Activated CD4-positive, alpha-beta T cell treated with anti-CD3 and anti-CD28 coated beads for 36 hours (primary cell): ENCODE measurements at regions of chr3 and their contacts with region 1.

Region 1: DNA sequence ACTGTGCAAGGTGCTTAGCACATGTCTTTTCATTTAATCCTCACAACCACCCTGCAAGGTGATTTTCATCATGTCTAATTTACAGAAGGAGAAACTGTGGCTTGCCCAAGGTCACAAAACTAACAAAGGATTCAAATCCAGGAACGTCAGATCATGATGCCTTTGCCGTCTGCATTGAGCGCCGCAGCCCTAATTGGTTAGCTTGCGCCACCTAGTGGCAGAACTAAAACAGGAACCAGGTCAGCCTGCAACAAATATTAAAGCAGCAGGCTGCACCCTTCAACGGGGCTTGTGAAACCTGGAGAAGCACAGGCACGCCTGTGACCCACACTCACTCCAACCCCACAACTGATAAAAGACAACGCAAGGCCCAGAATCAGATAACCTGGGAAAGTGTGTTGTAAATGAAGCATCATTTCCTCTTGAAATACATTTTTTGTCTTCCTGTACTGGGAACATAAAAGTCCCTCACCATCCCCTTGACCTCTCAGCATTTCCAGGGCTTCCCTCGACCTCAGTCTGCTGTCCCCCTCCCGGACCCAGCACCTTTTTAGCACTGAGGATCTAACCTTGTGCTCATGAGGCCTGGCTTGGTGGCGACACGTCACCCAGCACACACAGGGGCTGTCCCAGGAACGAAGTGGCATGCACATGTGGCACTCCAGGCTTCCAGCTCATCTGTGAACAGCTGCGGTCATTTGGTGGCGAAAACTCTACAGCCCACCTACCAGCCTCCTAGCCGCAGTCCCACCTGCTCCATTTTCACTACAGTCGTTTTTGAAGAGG is 17.3 kb downstream of the DPH3 start:
- DNase-seq: peak; percentile 88
- ATAC-seq: peak; percentile 83
- H3K4me3 Mint-ChIP-seq: no peak overlapping the region
- H3K27ac Mint-ChIP-seq: no peak overlapping the region
- H3K4me1 Mint-ChIP-seq: peaks cover 17% of the 10 kb centered on the region
- H3K27me3 Mint-ChIP-seq: no peaks in the 10 kb centered on the region

Region 2: GRCh38 chr3:15815696-15816095 is 431.8 kb before region 1 on chr3:
- CTCF ChIA-PET with region 1: interaction called, 3 read pairs
- POLR2A ChIA-PET with region 1: no interaction called
- intact Hi-C with region 1: loop called (anchors 1 kb)
- DNase-seq: no peak
- ATAC-seq: no peak
- H3K4me3 Mint-ChIP-seq: no peak overlapping the region
- H3K27ac Mint-ChIP-seq: no peak overlapping the region
- H3K4me1 Mint-ChIP-seq: peaks cover 41% of the 10 kb centered on the region
- H3K27me3 Mint-ChIP-seq: no peaks in the 10 kb centered on the region

Region 3: DNA sequence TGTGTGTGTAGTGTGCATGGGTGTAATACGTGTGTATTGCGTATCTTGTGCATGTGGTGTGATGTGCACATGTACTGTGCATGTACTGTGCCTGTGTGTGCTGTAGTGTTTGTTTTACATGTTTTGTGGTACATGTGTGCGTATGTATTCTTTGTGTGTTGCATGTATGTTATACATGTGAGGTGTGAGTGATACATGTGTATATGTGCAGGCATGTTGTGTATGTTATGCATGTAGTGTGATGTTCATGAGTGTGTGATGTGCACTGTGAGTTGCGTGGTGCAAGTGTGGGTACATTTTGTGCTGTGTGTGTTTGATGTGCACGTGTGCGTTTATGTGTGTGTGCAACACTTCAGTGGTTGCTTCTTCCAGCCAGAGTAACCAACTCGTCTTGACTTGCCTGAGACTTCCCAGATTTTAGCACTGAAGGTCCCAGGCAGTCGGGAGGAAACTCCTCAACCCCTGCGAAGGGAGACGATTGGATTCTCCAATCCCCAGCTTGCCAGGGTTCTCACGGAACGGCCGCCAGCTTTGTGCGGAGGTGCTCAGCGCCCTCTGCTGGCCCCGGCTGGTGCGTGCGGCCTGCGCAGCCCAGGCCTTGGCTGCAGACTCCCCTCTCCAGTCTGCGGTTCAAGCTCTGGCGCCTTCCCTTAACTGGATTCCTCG is 69.4 kb before region 1 on chr3:
- CTCF ChIA-PET with region 1: interaction called, 5 read pairs
- POLR2A ChIA-PET with region 1: no interaction called
- intact Hi-C with region 1: loop called (anchors 1 kb)
- DNase-seq: peak; percentile 85
- ATAC-seq: peak; percentile 87
- H3K4me3 Mint-ChIP-seq: no peak overlapping the region
- H3K27ac Mint-ChIP-seq: no peak overlapping the region
- H3K4me1 Mint-ChIP-seq: no peaks in the 10 kb centered on the region
- H3K27me3 Mint-ChIP-seq: peaks cover 18% of the 10 kb centered on the region